ENCODE measurements at regions of chr6 and their contacts with region 1.

Region 1: DNA sequence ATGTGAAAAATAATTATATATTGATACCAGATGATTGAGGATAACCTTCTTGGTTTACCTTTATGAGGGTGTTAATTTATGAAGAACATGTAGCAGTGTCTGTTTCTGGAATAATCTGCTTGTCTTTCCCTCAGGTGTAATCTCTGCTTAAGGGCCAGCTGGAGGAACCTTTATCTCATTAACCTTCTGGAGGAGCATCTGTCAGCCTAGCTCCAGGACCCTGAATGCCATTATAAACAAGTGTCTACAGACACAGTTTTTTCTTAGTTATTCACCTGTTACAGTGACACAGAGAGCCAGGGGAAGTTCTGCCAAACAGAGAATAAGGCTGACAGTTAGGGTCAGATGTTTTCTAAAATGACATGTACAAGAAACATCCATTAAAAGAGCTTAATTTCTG is at the start of gene IMPG1:
- DNase-seq: no peak
- H3K4me3 ChIP-seq: no peak within 1 kb of the TSS
- H3K27ac ChIP-seq: no peak within 1 kb of the TSS
- H3K4me1 ChIP-seq: no peaks in the 10 kb centered on the region
- H3K27me3 ChIP-seq: no peaks in the 10 kb centered on the region
- CTCF ChIP-seq: no peak
- total RNA-seq, gene IMPG1: not detected in 2 replicates

Region 2: DNA sequence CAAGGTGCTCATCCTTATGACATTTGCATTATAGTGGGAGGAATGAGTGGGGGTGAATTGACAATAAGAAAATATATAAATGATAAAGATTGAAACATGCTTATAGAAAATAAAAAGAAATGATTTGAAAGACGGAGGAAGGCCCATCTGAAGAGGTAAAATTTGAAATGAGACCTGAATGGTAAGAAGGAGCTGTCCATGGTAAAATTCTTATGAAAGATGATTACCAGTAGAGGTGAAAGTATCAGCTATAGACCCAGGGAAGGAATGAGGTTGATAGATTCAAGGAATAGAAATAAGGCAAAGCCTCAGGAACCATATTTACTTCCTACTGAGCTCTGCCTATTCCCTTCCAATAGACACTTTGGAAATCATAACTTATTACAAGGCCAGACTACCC is 1241.0 kb after region 1 on chr6:
- CTCF ChIA-PET with region 1: no interaction called
- POLR2A ChIA-PET with region 1: interaction called, 15 read pairs
- intact Hi-C with region 1: no loop called
- DNase-seq: no peak
- H3K4me3 ChIP-seq: no peak overlapping the region
- H3K27ac ChIP-seq: no peak overlapping the region
- H3K4me1 ChIP-seq: no peaks in the 10 kb centered on the region
- H3K27me3 ChIP-seq: no peaks in the 10 kb centered on the region
- CTCF ChIP-seq: no peak